ENCODE measurements at regions of chr6 and their contacts with region 1.

Region 1: GRCh38 chr6:42038811-42039408 is 11.4 kb upstream of the TAF8 start:
- DNase-seq: no peak
- H3K4me3 Mint-ChIP-seq: peak overlapping the region; percentile 83
- H3K27ac Mint-ChIP-seq: peak overlapping the region; percentile 97
- H3K4me1 Mint-ChIP-seq: peaks cover 69% of the 10 kb centered on the region
- H3K27me3 Mint-ChIP-seq: no peaks in the 10 kb centered on the region

Region 2: DNA sequence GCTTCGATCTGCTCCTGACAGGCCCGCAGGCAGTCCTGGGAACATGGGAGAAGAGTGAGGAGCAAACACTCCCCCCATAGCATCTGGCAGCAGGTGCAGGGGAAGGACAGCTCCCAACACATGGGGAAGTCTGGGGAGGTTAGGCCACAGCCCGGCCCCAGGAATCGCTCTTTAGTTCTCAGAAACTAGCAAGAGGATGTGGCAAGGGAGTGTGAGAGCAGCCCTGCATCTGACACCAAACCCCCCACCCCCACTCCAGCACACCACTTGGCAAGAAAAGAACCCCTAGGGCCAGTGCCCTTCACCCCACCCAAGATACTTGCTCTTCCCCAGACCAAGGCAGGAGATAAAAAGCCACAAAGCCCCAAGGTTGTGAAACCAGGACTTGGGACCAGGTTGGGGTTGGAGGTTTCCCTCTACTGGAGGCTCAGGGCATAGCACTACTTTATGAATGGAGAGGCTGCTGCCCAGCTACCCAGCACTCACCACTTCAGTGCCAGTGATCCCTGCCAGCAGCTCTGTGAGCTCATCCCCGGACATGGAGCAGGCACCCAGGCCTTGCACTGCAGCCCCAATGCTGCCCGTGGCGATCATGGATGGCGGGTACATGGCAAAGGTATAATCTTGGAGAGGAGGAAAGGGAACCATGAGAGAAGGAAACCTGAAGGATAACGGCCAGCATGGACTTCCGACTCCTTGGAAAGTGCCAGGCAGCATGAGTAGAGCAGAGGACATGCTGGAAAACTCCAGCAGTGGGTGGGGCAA is 102.7 kb before region 1 on chr6:
- CTCF ChIA-PET with region 1: interaction called, 296 read pairs
- intact Hi-C with region 1: loop called (anchors 1 kb)
- DNase-seq: peak; percentile 80
- H3K4me3 Mint-ChIP-seq: peak overlapping the region; percentile 100
- H3K27ac Mint-ChIP-seq: peak overlapping the region; percentile 99
- H3K4me1 Mint-ChIP-seq: peaks cover 38% of the 10 kb centered on the region
- H3K27me3 Mint-ChIP-seq: no peaks in the 10 kb centered on the region

Region 3: GRCh38 chr6:41958022-41958856 is 80.7 kb before region 1 on chr6:
- CTCF ChIA-PET with region 1: interaction called, 35 read pairs
- intact Hi-C with region 1: loop called (anchors 1 kb)
- DNase-seq: peak; percentile 76
- H3K4me3 Mint-ChIP-seq: peak overlapping the region; percentile 32
- H3K27ac Mint-ChIP-seq: peak overlapping the region; percentile 98
- H3K4me1 Mint-ChIP-seq: peaks cover 83% of the 10 kb centered on the region
- H3K27me3 Mint-ChIP-seq: no peaks in the 10 kb centered on the region

Region 4: DNA sequence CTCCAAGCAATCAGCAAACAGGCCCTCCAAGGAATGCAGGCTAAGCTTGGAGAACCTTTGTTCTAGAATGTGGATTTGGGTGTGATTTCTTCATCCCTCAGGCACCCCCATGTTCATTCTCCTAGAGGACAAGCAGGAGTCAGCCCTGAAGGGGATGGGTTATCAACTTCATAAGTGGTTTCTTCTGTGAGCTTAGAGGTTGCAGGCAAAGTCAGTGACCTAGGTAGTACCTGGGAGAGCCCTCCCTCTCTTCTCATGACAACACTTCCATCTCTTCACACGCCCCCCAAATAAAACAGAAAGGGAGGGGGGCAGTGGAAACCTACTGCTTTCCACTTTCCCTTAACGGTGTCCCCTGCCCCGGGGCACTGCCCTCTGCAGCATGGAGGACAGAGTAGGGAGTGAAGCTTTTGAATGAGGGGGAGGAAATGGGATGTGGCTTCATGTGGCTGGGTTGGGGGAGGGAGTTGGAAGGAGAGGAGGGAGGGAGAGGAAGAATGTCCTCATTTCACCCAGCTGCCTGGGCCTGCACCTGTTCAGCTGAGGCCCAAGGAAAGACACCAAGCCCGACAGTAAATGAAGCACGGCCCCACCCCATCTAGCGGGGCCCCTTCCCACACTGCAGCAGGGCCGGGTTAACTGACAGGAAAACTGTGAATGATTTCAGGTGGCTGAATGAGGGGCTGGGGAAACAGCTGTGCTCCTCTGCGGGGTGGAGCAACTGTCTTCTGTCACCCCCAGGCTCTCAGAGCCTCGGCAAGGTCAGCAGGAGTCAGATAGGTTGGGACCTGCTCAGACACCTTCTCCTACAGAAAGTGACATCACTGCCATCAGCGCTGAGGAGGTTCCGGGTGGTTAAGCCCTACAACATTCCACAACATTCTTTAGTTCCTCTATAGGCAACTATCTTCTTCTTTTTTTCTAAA is 28.7 kb before region 1 on chr6:
- CTCF ChIA-PET with region 1: interaction called, 17 read pairs
- intact Hi-C with region 1: loop called (anchors 1 kb)
- DNase-seq: peak; percentile 86
- H3K4me3 Mint-ChIP-seq: peak overlapping the region; percentile 83
- H3K27ac Mint-ChIP-seq: peak overlapping the region; percentile 100
- H3K4me1 Mint-ChIP-seq: peaks cover 76% of the 10 kb centered on the region
- H3K27me3 Mint-ChIP-seq: no peaks in the 10 kb centered on the region

Region 5: DNA sequence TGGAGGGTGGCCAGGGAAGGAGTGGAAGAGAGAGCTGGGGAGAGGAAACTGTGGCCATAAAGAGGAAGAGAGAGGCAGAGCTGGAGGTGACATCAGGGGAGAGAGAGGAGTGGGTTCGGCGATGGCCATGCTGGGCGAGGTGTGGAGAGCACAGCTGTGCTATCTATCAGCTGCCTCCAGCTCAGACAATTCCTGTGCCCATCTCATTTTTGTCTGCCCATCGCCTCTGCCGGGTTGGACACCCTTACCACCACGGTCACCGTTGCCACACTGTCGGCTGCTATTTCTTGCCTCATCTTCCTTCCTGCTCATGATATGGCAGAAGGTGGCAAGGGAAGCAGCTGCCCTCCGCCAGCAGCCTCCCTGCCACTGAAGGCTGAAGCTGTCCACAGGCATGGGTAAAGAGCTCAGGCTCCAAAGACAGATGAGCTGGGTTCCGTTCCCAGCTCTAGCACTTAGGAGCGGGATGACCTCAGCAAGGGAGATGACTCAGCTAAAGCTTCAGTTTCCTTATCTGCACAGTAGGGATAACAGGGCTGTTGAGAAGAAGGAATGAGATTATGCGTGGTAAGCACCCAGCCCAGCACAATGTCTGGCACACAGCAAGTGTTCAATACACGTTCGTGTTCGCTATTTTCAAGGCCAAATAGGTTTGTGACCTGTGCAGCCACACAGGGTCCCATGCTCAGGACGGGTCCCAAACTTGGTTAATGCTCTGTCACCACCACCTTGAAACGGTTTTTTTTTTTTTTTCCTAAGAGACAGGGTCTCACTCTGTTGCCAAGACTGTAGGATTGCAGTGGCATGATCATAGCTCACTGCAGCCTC is 10.5 kb before region 1 on chr6:
- CTCF ChIA-PET with region 1: interaction called, 17 read pairs
- intact Hi-C with region 1: loop called (anchors 1 kb)
- DNase-seq: peak; percentile 70
- H3K4me3 Mint-ChIP-seq: peak overlapping the region; percentile 68
- H3K27ac Mint-ChIP-seq: peak overlapping the region; percentile 99
- H3K4me1 Mint-ChIP-seq: peaks cover 94% of the 10 kb centered on the region
- H3K27me3 Mint-ChIP-seq: no peaks in the 10 kb centered on the region